Activated CD8-positive, alpha-beta memory T cell treated with anti-CD3 and anti-CD28 coated beads, Interleukin-2, amount 10 ng/mL, durations not matched to agents 7 days and 5 days (primary cell): ENCODE measurements at regions of chr6 and their contacts with region 1.

Region 1: DNA sequence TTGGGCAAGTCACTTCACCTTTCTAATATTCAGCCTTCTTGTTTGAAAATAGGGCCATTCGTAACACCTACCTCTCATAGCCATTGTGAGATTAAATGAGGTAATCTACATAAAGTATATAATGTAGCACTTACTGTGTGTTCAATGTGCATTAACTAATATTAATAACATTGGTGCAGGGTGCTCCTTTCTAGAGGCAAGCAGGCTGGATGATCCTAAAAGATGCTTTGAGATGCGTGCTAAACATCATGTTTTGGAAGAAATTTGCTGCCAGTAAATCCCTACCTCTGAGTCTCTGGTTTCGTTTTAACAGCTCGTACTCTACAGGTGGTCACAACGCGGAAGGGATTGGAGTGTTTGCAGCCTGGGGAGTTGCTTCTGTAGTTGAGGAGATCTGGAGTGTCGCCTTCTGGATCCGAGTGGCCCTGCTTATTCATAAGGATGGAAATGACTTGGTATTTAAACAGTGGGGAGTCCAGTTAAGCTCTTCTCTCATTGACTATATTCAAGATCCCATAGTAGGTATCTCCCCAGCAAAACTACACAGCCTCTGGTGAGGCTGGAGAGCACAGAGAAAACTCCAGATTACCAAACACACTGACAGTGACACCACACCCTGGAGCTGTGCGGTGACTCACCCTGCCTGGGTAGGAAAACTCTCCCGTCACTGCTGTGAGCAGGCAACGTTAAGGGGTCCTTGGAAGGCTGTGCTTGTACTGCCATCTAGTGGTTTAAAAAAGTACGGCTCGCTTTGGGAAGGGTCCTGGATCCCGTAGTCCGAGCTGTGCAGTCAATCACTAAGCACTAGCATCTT is 107.9 kb downstream of the MAP3K7 start:
- DNase-seq: peak; percentile 88
- ATAC-seq: peak; percentile 96
- H3K4me3 Mint-ChIP-seq: no peak overlapping the region
- H3K27ac Mint-ChIP-seq: peak overlapping the region; percentile 74
- H3K4me1 Mint-ChIP-seq: peaks cover 52% of the 10 kb centered on the region
- H3K27me3 Mint-ChIP-seq: peaks cover 6% of the 10 kb centered on the region

Region 2: DNA sequence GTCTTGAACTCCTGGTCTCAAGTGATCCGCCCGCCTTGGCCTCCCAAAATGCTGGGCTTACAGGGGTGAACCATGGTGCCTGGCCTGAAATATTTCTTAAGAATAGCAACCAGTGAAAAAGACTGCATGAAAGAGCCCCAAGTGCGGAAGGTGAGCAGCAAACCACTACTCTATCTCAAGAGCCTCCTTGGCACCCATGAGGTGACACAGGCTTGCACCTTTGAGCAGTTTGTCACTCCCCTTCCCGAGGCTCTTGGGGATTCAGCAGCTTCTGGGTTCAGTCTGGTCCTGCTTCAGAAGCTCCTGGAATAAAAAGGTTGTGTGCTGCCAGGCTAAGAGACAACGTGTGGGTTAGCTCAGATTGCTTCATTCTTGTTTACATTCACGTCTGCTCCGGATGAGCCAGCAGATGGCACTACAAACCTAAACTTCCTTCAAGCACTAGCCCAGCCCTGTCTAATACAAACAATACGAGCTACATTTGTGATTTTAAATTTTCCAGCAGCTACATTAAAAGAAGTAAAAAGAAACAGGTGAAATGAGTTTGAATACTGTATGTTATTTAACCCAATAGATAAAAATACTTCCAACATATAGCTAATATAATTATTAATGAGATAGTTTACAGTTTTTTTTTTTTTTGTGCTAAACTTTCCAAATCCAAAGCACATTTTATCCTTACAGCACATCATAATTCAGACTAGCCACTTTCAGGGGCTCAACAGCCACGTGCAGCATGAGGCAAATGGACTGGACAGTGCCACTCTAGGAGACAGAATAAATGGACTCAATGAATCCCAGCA is 538.6 kb before region 1 on chr6:
- CTCF ChIA-PET with region 1: interaction called, 153 read pairs
- DNase-seq: peak; percentile 83
- ATAC-seq: peak; percentile 94
- H3K4me3 Mint-ChIP-seq: no peak overlapping the region
- H3K27ac Mint-ChIP-seq: no peak overlapping the region
- H3K4me1 Mint-ChIP-seq: peaks cover 33% of the 10 kb centered on the region
- H3K27me3 Mint-ChIP-seq: no peaks in the 10 kb centered on the region

Region 3: DNA sequence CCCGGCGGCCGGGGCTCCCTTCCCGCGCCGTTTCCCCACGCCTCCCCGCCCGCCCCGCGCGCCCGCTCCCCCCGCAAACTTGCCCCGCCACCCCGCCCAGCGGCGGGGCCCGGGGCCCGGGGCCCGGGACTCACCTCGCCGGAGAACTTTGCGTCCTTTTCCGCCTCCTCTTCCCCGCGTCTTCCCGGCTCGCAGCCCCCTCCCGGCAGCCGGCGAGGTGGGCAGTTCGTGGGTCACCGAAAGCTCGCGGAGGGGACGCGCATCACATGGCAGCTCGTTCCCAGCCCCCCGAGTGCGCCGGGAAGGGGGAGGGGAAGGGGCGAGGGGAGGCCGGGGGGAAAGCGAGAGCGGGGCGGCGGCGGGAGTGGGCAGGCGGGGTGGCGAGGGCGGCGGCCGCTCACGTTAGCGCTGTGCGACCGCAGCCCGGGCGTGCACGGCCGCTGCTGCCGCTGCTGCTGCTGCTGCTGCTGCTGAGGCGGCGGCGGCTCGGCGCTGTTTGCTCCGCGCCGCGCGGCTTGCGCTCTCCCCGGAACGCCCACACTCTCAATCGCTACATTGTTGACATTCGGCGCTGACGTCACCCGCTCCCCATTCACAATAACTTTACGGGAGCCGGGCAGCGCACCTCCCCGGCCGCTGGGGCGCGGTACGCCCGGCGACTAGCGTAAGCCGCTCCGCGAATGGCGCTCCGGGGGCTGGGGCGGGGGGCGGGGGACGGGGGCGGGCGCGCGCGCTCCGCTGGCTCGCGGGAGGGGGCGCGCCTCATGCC is 182.5 kb before region 1 on chr6 and contains the start of gene BACH2:
- CTCF ChIA-PET with region 1: interaction called, 258 read pairs
- DNase-seq: peak; percentile 95
- ATAC-seq: peak; percentile 81
- H3K4me3 Mint-ChIP-seq: peak within 1 kb of the TSS; percentile 84
- H3K27ac Mint-ChIP-seq: peak within 1 kb of the TSS; percentile 85
- H3K4me1 Mint-ChIP-seq: peaks cover 24% of the 10 kb centered on the region
- H3K27me3 Mint-ChIP-seq: peaks cover 52% of the 10 kb centered on the region
- total RNA-seq, gene BACH2: 21.5 to 22.6 TPM

Region 4: DNA sequence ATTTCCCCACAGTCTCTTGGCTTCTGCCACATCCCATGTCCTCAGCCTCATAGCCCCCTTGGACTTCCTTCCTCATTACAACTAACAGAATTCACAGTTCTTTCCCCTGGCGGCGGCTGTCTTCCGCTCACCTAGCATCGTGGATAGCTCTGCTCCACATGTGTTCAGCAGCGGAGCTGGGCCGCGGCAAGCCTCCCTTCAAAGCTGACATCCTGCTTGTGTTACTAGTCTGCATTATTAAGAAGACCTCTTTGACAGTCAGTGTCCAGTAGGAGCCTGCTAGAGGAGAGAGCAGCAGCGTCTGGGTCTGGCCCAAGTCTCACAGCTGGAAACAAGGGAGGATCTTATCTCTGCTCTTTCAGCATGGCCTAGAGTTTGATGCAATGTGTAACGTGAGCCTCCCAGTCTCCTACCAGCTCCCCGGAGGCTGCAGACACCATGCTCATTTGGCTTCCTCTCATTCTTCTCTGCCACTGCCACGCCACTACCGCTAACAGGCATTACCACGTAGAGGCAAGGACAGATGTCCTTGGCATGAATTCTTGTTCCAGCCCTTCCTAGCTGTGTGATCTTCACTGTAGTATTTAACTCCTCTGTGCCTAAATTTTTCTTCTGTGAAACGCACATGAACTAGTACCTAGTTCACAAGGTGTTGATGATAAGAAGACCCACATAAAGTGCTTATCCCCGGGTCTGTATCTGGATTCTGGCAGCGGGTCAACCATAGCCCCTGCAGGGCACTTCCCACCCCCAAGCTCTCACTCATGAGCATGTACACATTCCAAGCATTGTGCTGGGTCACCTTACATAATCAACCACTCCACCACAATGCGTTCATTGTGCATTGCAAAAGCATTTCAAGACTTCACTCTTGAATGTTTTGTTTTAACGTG is 75.3 kb before region 1 on chr6:
- CTCF ChIA-PET with region 1: interaction called, 33 read pairs
- DNase-seq: no peak
- ATAC-seq: no peak
- H3K4me3 Mint-ChIP-seq: no peak overlapping the region
- H3K27ac Mint-ChIP-seq: peak overlapping the region; percentile 77
- H3K4me1 Mint-ChIP-seq: peaks cover 77% of the 10 kb centered on the region
- H3K27me3 Mint-ChIP-seq: no peaks in the 10 kb centered on the region

Region 5: DNA sequence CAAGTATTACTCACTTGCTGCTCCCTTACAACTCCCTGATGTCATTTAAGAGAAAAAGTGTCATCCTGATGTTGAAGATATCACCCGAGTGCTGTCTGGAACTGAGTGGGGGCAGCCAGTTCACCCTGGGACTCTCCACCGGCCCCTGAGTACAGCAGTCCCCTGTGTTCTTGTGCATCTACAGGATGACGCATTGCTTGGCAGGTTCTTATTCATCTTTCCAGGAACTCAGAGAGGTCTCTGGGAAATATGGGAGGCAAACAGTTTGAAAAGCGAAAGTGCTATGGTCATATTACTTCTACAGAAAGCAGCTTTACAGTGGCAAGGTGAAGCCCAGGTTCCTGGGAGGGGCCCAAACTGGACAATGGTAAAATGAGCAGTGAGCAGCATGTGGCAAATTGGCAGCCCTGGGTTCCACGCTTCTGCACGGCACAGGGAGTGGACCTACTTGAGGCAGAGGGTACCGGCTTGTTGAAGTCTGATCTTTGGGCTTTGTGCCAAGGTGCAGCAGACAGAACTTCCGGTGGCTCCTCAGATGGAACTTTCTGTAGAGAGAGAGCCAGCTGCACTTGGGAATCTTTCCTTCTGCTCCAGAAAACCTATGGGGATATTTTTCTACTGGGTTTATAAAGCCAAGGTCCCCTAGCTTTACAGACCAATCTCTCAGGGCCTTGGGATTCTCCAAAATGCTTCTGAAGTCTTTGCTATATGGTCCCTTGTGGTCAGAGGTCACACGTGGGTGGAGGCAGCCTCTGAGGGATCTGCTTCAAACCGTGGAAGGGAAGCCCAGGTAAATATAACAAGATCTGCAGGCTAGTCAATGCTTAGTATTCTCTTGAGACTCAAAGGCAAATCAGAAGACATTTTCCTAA is 20.4 kb before region 1 on chr6:
- CTCF ChIA-PET with region 1: interaction called, 46 read pairs
- DNase-seq: peak; percentile 91
- ATAC-seq: peak; percentile 91
- H3K4me3 Mint-ChIP-seq: peak overlapping the region; percentile 65
- H3K27ac Mint-ChIP-seq: peak overlapping the region; percentile 93
- H3K4me1 Mint-ChIP-seq: peaks cover 70% of the 10 kb centered on the region
- H3K27me3 Mint-ChIP-seq: no peaks in the 10 kb centered on the region

Region 6: GRCh38 chr6:90508753-90509152 is 29.8 kb after region 1 on chr6:
- CTCF ChIA-PET with region 1: no interaction called
- DNase-seq: no peak
- ATAC-seq: no peak
- H3K4me3 Mint-ChIP-seq: no peak overlapping the region
- H3K27ac Mint-ChIP-seq: no peak overlapping the region
- H3K4me1 Mint-ChIP-seq: peaks cover 4% of the 10 kb centered on the region
- H3K27me3 Mint-ChIP-seq: peaks cover 3% of the 10 kb centered on the region

Region 7: GRCh38 chr6:90547991-90548390 is 69.0 kb after region 1 on chr6:
- CTCF ChIA-PET with region 1: no interaction called
- DNase-seq: no peak
- ATAC-seq: no peak
- H3K4me3 Mint-ChIP-seq: no peak overlapping the region
- H3K27ac Mint-ChIP-seq: no peak overlapping the region
- H3K4me1 Mint-ChIP-seq: peaks cover 2% of the 10 kb centered on the region
- H3K27me3 Mint-ChIP-seq: no peaks in the 10 kb centered on the region